Head of caudate nucleus (tissue), 42 donors: ENCODE measurements at regions of chr1 and their contacts with region 1.

Region 1: GRCh38 chr1:32291708-32292492 is at the start of gene HDAC1:
- DNase-seq: peak; percentile 78 to 95 (median 89)

Region 2: GRCh38 chr1:32242341-32242851 is 49.5 kb before region 1 on chr1:
- intact Hi-C with region 1: loop called (anchors 2 kb)
- DNase-seq: peak; percentile 44 to 88 (median 68)

Region 3: GRCh38 chr1:32454726-32455125 is 162.8 kb after region 1 on chr1:
- intact Hi-C with region 1: no loop called
- DNase-seq: peak in 29 of 42 donors; percentile 11 to 79 (median 31)